ENCODE measurements at regions of chr1 and their contacts with region 1.

Region 1: GRCh38 chr1:58816072-58816746 is 32.4 kb upstream of the JUN start:
- DNase-seq: peak; percentile 84
- H3K4me3 ChIP-seq: peak overlapping the region; percentile 51 to 70 (median 56)
- H3K27ac ChIP-seq: peak overlapping the region; percentile 77
- H3K4me1 ChIP-seq: peaks cover 71% of the 10 kb centered on the region
- H3K27me3 ChIP-seq: no peaks in the 10 kb centered on the region
- CTCF ChIP-seq: peak in 1 of 2 donors; percentile 25

Region 2: GRCh38 chr1:58508629-58509028 is 307.6 kb before region 1 on chr1:
- CTCF ChIA-PET with region 1: no interaction called
- dilution Hi-C with region 1: no loop called
- in situ Hi-C with region 1: no loop called
- intact Hi-C with region 1: no loop called
- DNase-seq: no peak
- H3K4me3 ChIP-seq: no peak overlapping the region
- H3K27ac ChIP-seq: no peak overlapping the region
- H3K4me1 ChIP-seq: no peaks in the 10 kb centered on the region
- H3K27me3 ChIP-seq: no peaks in the 10 kb centered on the region
- CTCF ChIP-seq: no peak

Region 3: DNA sequence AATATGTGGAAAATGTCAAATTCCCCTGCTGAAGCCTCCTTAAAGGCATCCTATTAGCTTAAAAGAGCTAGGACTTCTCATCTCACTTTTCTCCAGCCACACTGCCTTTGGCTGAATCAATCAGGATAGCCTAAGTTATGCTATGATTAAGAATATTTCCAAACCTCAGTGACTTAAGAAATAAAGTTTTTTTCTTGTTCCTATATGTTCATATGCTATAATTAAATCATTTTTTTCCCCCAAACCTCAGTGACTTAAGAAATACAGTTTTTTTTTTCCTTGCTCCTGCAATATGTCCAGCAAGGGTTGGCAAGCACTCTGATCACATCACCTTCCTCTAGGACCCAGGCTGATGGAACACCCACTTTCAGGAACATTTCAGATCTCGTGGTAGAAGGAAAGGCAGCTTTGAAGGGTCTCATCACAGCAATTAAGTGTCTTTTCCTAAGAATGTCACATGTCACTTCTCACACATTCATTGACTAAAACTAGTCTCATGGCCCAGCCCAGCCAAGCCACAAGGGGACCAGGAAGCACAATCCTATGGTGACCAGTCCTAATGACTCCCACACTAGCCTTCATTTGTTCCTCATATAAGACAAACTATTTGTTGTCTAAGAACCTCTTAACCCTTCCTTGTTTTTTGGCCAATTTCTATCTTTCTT is 26.1 kb before region 1 on chr1:
- CTCF ChIA-PET with region 1: no interaction called
- dilution Hi-C with region 1: loop called (anchors 5 kb)
- in situ Hi-C with region 1: no loop called
- intact Hi-C with region 1: loop called (anchors 1 kb)
- DNase-seq: no peak
- H3K4me3 ChIP-seq: no peak overlapping the region
- H3K27ac ChIP-seq: no peak overlapping the region
- H3K4me1 ChIP-seq: peaks cover 13% of the 10 kb centered on the region
- H3K27me3 ChIP-seq: no peaks in the 10 kb centered on the region
- CTCF ChIP-seq: no peak

Region 4: GRCh38 chr1:58848818-58849411 is 32.7 kb after region 1 on chr1:
- CTCF ChIA-PET with region 1: no interaction called
- dilution Hi-C with region 1: no loop called
- in situ Hi-C with region 1: no loop called
- intact Hi-C with region 1: loop called (anchors 1 kb)
- DNase-seq: peak; percentile 100
- H3K4me3 ChIP-seq: no peak overlapping the region
- H3K27ac ChIP-seq: peak overlapping the region; percentile 76
- H3K4me1 ChIP-seq: peaks cover 35% of the 10 kb centered on the region
- H3K27me3 ChIP-seq: no peaks in the 10 kb centered on the region
- CTCF ChIP-seq: peak in 1 of 2 donors; percentile 34

Region 5: GRCh38 chr1:58883037-58883887 is 67.1 kb after region 1 on chr1:
- CTCF ChIA-PET with region 1: no interaction called
- dilution Hi-C with region 1: no loop called
- in situ Hi-C with region 1: no loop called
- intact Hi-C with region 1: loop called (anchors 5 kb)
- DNase-seq: peak; percentile 96
- H3K4me3 ChIP-seq: no peak overlapping the region
- H3K27ac ChIP-seq: peak overlapping the region; percentile 78
- H3K4me1 ChIP-seq: peaks cover 38% of the 10 kb centered on the region
- H3K27me3 ChIP-seq: no peaks in the 10 kb centered on the region
- CTCF ChIP-seq: no peak

Region 6: GRCh38 chr1:58903514-58904298 is 87.5 kb after region 1 on chr1:
- CTCF ChIA-PET with region 1: no interaction called
- dilution Hi-C with region 1: no loop called
- in situ Hi-C with region 1: no loop called
- intact Hi-C with region 1: loop called (anchors 10 kb)
- DNase-seq: peak; percentile 84
- H3K4me3 ChIP-seq: peak overlapping the region; percentile 14 to 52 (median 48)
- H3K27ac ChIP-seq: peak overlapping the region; percentile 72
- H3K4me1 ChIP-seq: peaks cover 32% of the 10 kb centered on the region
- H3K27me3 ChIP-seq: no peaks in the 10 kb centered on the region
- CTCF ChIP-seq: no peak

Region 7: GRCh38 chr1:58932859-58933598 is 116.8 kb after region 1 on chr1:
- CTCF ChIA-PET with region 1: no interaction called
- dilution Hi-C with region 1: no loop called
- in situ Hi-C with region 1: no loop called
- intact Hi-C with region 1: loop called (anchors 1 kb)
- DNase-seq: peak; percentile 98
- H3K4me3 ChIP-seq: no peak overlapping the region
- H3K27ac ChIP-seq: peak overlapping the region; percentile 91
- H3K4me1 ChIP-seq: peaks cover 52% of the 10 kb centered on the region
- H3K27me3 ChIP-seq: no peaks in the 10 kb centered on the region
- CTCF ChIP-seq: no peak

Measured in mammary epithelial cell (primary cell).